ENCODE measurements at regions of chr22 and their contacts with region 1.

Region 1: DNA sequence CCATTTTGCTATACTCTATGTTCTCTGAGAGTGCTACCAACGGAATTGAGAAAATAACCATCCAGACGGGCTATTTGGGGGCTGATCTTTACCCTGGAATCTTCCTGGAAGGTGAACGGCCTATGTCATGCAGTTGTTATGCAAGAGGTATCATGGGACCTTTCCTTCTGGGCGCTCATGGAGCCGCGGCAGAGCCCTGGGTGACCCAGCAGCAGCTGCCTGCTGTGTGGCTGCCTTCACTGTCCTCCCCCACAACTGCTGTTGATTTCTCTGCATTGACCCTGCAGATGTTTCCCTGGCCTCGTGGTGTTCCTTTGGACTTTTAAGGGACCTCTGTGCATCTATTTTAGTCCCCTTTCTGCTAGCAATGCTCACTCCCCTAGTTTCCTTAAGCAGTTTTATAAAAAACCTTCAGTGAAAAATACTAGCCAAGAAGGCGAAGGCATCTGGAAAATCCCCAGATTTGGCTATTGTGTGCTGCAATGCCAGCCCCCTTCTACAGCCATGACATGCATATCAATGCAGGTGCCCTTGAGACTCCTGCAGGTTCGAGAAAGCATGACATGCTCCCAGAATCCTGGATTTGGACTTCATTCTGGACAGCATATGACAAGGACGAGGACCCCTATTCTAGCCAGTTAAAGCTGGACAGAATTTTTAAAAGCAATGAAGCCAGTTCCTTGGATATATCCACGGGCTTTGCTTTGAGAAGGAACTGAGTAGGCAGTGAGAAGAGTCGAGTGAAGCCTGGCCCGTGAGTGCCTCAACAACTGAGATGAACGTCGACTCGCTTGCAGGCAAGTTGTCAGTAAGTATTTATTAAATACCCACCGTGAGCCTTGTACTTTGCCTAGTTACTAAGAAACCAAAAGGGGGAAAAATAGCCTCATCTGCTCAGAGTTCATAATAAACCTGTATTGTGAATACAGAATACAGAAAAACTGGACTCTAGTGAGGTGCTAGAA is at the start of gene SLC25A18:
- DNase-seq: no peak
- H3K4me3 Mint-ChIP-seq: no peak within 1 kb of the TSS
- H3K27ac Mint-ChIP-seq: no peak within 1 kb of the TSS
- H3K4me1 Mint-ChIP-seq: peaks cover 11% of the 10 kb centered on the region
- H3K27me3 Mint-ChIP-seq: no peaks in the 10 kb centered on the region
- CTCF ChIP-seq: no peak
- total RNA-seq, gene SLC25A18: 0.15 and 0.35 TPM in 2 replicates

Region 2: DNA sequence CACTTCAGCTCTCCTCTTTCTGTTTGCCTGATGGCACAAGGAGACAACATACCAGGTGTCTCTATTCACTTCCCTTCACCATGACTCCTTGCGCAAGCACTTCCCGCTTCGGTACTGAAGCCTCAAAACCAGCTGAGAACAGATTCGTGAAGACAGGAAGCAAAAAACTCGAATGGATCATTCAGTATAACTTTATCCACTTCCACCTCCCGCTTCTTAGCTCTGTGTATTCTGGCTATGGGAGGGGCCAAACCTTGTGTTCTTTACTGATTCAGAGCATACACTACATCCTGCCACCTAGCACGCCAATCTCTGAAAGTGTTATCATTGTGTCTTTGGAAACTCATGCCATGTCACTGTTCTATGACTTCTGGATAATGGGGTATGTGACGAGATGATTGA is 281.7 kb before region 1 on chr22:
- CTCF ChIA-PET with region 1: no interaction called
- POLR2A ChIA-PET with region 1: no interaction called
- intact Hi-C with region 1: no loop called
- DNase-seq: no peak
- H3K4me3 Mint-ChIP-seq: no peak overlapping the region
- H3K27ac Mint-ChIP-seq: no peak overlapping the region
- H3K4me1 Mint-ChIP-seq: no peaks in the 10 kb centered on the region
- H3K27me3 Mint-ChIP-seq: no peaks in the 10 kb centered on the region
- CTCF ChIP-seq: no peak

Region 3: GRCh38 chr22:17587629-17588028 is 24.4 kb after region 1 on chr22:
- CTCF ChIA-PET with region 1: interaction called, 15 read pairs
- POLR2A ChIA-PET with region 1: interaction called, 3 read pairs
- intact Hi-C with region 1: no loop called
- DNase-seq: no peak
- H3K4me3 Mint-ChIP-seq: no peak overlapping the region
- H3K27ac Mint-ChIP-seq: no peak overlapping the region
- H3K4me1 Mint-ChIP-seq: no peaks in the 10 kb centered on the region
- H3K27me3 Mint-ChIP-seq: no peaks in the 10 kb centered on the region
- CTCF ChIP-seq: no peak

Region 4: GRCh38 chr22:17606496-17606895 is 43.3 kb after region 1 on chr22:
- CTCF ChIA-PET with region 1: interaction called, 14 read pairs
- POLR2A ChIA-PET with region 1: interaction called, 6 read pairs
- intact Hi-C with region 1: no loop called
- DNase-seq: no peak
- H3K4me3 Mint-ChIP-seq: no peak overlapping the region
- H3K27ac Mint-ChIP-seq: no peak overlapping the region
- H3K4me1 Mint-ChIP-seq: no peaks in the 10 kb centered on the region
- H3K27me3 Mint-ChIP-seq: no peaks in the 10 kb centered on the region
- CTCF ChIP-seq: no peak

Region 5: GRCh38 chr22:17638432-17639246 is 75.5 kb after region 1 on chr22 and contains the start of gene BCL2L13:
- CTCF ChIA-PET with region 1: interaction called, 12 read pairs
- POLR2A ChIA-PET with region 1: interaction called, 7 read pairs
- intact Hi-C with region 1: loop called (anchors 1 kb)
- DNase-seq: peak; percentile 90
- H3K4me3 Mint-ChIP-seq: peak within 1 kb of the TSS; percentile 89
- H3K27ac Mint-ChIP-seq: peak within 1 kb of the TSS; percentile 100
- H3K4me1 Mint-ChIP-seq: peaks cover 14% of the 10 kb centered on the region
- H3K27me3 Mint-ChIP-seq: no peaks in the 10 kb centered on the region
- CTCF ChIP-seq: no peak
- total RNA-seq, gene BCL2L13: 53.6 and 75.1 TPM in 2 replicates

Region 6: DNA sequence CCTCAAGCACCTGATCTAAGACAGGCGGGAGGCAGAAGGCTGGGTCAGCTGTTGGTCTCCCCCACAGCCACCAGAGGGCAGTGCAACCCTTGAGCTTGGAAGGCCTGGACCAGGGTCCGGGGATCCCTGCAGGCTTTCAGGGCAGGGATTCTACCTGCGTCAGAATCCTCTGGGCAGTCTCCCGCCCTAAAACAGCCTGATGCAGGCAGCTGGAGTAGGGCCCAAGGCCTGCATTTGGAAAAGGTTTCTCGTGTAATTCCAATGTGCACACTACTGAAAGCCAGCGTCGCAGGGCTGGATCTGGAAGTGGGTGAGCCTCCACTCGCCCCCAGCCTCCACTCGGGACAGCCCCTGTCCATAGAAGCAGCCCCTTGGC is 179.3 kb after region 1 on chr22:
- CTCF ChIA-PET with region 1: interaction called, 28 read pairs
- POLR2A ChIA-PET with region 1: no interaction called
- intact Hi-C with region 1: loop called (anchors 1 kb)
- DNase-seq: peak; percentile 76
- H3K4me3 Mint-ChIP-seq: no peak overlapping the region
- H3K27ac Mint-ChIP-seq: no peak overlapping the region
- H3K4me1 Mint-ChIP-seq: no peaks in the 10 kb centered on the region
- H3K27me3 Mint-ChIP-seq: no peaks in the 10 kb centered on the region
- CTCF ChIP-seq: peak; percentile 82